ENCODE measurements at regions of chr22 and their contacts with region 1.

Region 1: GRCh38 chr22:19730655-19731360 is 7.5 kb downstream of the GP1BB start:
- DNase-seq: peak; percentile 78 to 95 (median 85)
- ATAC-seq: peak; percentile 91
- H3K4me3 ChIP-seq: peak overlapping the region in 1 of 2 experiments; percentile 66
- H3K4me3 Mint-ChIP-seq: peak overlapping the region; percentile 82
- H3K27ac ChIP-seq: no peak overlapping the region
- H3K27ac Mint-ChIP-seq: no peak overlapping the region
- H3K4me1 ChIP-seq: peaks cover 10% of the 10 kb centered on the region
- H3K4me1 Mint-ChIP-seq: peaks cover 2% of the 10 kb centered on the region
- H3K27me3 ChIP-seq: peaks cover 0 to 2% of the 10 kb centered on the region in 2 experiments
- H3K27me3 Mint-ChIP-seq: no peaks in the 10 kb centered on the region
- CTCF ChIP-seq: peak; percentile 82

Region 2: DNA sequence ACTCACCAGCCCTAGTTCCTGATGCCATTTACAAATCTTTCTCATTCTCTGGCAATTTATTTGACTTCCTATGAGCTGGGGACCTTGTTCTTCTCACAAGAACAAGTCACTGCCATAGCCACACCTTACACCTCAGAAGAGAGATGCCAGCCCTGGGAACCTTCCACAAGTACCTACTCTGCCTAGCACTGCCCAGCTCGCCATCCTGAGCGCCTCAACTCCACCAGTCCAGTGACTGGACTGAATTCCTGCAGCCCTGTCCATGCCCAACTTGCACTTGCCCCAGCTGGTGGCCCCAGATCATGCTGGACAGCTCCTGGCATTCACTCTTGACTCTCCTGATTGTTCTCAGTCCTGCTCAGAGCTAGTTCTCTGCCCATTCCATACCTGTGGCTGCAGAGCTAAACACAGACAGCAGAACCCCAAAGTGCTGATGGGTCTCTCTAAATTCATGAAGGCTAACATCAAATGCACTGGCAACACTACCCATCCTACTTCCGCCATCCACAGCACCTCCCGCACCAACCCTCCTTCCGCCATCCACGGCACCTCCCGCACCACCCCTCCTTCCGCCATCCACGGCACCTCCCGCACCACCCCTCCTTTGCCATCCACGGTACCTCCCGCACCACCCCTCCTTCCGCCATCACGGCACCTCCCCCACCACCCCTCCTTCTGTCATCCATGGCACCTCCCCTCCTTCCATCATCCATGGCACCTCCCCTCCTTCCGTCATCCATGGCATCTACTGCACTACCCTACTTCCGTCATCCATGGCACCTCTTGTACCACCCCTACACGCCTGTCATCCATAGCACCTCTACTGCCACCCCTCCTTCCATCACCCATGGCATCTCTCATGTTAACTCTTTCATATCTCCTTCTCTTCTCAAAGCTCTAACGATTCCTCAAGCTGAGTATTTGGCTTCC is 528.7 kb before region 1 on chr22:
- CTCF ChIA-PET with region 1: no interaction called
- POLR2A ChIA-PET with region 1: no interaction called
- intact Hi-C with region 1: no loop called
- DNase-seq: peak in 2 of 9 experiments; percentile 25 to 32
- ATAC-seq: no peak
- H3K4me3 ChIP-seq: no peak overlapping the region
- H3K4me3 Mint-ChIP-seq: no peak overlapping the region
- H3K27ac ChIP-seq: no peak overlapping the region
- H3K27ac Mint-ChIP-seq: no peak overlapping the region
- H3K4me1 ChIP-seq: no peaks in the 10 kb centered on the region
- H3K4me1 Mint-ChIP-seq: no peaks in the 10 kb centered on the region
- H3K27me3 ChIP-seq: no peaks in the 10 kb centered on the region
- H3K27me3 Mint-ChIP-seq: no peaks in the 10 kb centered on the region
- CTCF ChIP-seq: no peak

Region 3: DNA sequence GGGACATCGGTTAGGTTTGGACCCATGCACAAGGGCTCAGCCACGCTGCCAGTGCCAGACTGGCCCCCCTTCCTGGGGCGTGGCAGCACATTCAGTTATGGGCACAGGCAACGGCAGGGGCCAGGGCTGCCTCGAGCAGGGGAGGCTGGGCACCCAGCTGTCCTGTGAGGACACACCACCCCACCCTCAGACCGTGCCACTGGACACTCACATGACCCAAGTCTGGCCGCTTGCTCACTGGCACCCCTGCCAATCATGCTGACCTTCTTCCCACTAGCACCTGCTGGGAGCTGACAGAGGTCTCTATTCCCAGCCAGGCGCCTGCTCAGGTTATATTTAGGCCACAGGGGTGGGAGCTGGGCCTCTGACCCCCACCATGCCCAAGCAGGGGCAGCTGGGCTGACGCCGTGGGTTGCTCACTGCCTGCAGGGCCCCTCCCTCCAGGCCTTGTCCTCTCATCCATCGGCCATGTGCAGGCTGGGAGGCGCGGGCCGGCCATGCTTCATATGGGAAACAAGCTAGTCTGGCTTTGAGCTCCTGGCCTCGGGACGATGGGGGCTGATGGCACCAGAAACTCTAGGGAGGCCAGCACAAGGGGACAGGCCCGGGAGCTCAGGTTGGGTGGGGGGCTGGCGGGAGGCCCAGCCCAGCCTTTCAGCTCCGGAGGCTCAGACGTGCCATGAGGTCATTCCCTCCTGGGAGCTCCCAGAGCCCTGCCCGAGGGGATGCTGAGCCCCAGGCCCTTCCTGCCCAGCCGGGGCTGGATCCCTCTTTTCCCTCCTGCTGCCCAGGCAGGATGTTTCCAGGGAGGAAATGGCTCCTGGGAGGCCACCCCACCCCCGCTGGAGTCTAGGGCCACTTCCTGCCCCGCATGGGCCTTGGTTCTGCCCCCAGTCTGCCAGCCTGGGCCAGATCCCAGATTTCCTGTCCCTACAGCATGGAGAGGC is 14.6 kb after region 1 on chr22:
- CTCF ChIA-PET with region 1: interaction called, 20 read pairs
- POLR2A ChIA-PET with region 1: no interaction called
- intact Hi-C with region 1: no loop called
- DNase-seq: no peak
- ATAC-seq: no peak
- H3K4me3 ChIP-seq: no peak overlapping the region
- H3K4me3 Mint-ChIP-seq: no peak overlapping the region
- H3K27ac ChIP-seq: no peak overlapping the region
- H3K27ac Mint-ChIP-seq: no peak overlapping the region
- H3K4me1 ChIP-seq: no peaks in the 10 kb centered on the region
- H3K4me1 Mint-ChIP-seq: no peaks in the 10 kb centered on the region
- H3K27me3 ChIP-seq: no peaks in the 10 kb centered on the region
- H3K27me3 Mint-ChIP-seq: no peaks in the 10 kb centered on the region
- CTCF ChIP-seq: no peak

Region 4: DNA sequence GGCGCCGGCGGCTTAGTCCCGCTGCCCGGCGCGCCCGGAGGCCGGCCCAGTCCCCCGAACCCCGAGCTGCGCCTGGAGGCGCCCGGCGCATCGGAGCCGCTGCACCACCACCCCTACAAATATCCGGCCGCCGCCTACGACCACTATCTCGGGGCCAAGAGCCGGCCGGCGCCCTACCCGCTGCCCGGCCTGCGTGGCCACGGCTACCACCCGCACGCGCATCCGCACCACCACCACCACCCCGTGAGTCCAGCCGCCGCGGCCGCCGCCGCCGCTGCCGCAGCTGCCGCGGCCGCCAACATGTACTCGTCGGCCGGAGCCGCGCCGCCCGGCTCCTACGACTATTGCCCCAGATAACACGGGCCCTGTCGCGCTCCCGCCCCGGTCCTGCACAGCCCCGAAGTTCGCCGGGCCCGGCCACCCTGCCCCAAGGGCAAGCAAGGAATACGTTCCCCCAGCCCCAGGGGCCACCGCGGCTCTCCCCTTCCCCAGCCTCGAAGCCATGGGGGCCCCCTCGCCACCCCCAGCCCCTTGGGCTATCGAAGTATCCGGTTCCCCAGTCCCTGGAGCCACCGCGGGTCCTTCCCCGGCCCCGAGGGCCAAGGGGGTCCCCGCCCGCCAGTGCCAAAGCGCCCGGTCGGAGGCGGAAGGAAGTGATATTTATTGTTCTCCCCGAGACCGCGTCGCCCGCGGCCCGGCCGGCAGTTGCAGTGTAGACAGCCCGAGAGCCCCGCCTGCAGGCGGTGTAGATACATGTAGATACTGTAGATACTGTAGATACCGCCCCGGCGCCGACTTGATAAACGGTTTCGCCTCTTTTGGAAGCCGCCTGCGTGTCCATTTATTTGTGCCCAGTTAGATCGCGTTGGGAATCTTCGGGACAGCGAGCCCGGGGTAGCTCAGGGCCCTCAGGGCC is 36.0 kb after region 1 on chr22:
- CTCF ChIA-PET with region 1: interaction called, 10 read pairs
- POLR2A ChIA-PET with region 1: no interaction called
- intact Hi-C with region 1: no loop called
- DNase-seq: peak; percentile 13 to 64 (median 51)
- ATAC-seq: peak; percentile 73
- H3K4me3 ChIP-seq: peak overlapping the region in 1 of 2 experiments; percentile 26
- H3K4me3 Mint-ChIP-seq: peak overlapping the region; percentile 55
- H3K27ac ChIP-seq: no peak overlapping the region
- H3K27ac Mint-ChIP-seq: no peak overlapping the region
- H3K4me1 ChIP-seq: peaks cover 21% of the 10 kb centered on the region
- H3K4me1 Mint-ChIP-seq: peaks cover 18% of the 10 kb centered on the region
- H3K27me3 ChIP-seq: peaks cover 27 to 36% of the 10 kb centered on the region in 2 experiments
- H3K27me3 Mint-ChIP-seq: peaks cover 62% of the 10 kb centered on the region
- CTCF ChIP-seq: peak; percentile 27

Region 5: GRCh38 chr22:19891317-19892256 is 160.8 kb after region 1 on chr22:
- CTCF ChIA-PET with region 1: interaction called, 94 read pairs
- POLR2A ChIA-PET with region 1: no interaction called
- intact Hi-C with region 1: no loop called
- DNase-seq: peak; percentile 66 to 89 (median 82)
- ATAC-seq: peak; percentile 77
- H3K4me3 ChIP-seq: peak overlapping the region; percentile 45 to 55
- H3K4me3 Mint-ChIP-seq: peak overlapping the region; percentile 85
- H3K27ac ChIP-seq: peak overlapping the region; percentile 72 to 82
- H3K27ac Mint-ChIP-seq: peak overlapping the region; percentile 99
- H3K4me1 ChIP-seq: peaks cover 88% of the 10 kb centered on the region
- H3K4me1 Mint-ChIP-seq: peaks cover 90% of the 10 kb centered on the region
- H3K27me3 ChIP-seq: no peaks in the 10 kb centered on the region
- H3K27me3 Mint-ChIP-seq: no peaks in the 10 kb centered on the region
- CTCF ChIP-seq: no peak

Region 6: DNA sequence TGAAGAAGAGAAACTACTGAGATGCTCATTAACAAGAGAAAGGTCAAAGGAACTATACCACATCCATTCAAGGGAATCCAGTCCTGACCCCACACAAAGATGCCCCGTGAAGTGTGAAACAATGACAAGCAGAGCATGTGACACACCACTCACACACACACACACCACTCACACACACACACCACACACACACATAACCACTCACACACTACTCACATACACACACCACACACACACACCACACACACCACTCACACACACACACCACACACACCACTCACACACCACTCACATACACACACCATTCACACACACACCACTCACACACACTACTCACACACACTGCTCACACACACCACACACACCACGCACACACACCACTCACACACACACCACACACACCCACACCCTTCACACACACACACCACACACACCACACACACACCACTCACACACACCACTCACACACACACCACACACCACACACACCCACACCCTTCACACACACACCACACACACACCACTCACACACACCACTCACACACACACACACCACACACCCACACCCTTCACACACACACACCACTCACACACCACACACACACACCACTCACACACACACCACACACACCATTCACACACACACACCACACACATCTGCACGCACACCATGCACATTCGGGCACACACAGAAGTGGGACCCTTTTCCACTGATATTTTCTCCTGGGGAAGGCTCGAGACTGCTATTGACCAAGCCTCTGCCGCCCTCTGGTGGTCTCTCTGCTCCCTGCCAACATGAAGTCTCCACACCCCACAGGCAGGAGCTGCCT is 178.8 kb after region 1 on chr22:
- CTCF ChIA-PET with region 1: interaction called, 224 read pairs
- POLR2A ChIA-PET with region 1: interaction called, 13 read pairs
- intact Hi-C with region 1: loop called in 1 of 2 experiments (anchors 1 kb)
- DNase-seq: peak; percentile 71 to 91 (median 84)
- ATAC-seq: peak; percentile 91
- H3K4me3 ChIP-seq: no peak overlapping the region
- H3K4me3 Mint-ChIP-seq: no peak overlapping the region
- H3K27ac ChIP-seq: peak overlapping the region in 1 of 2 experiments; percentile 6
- H3K27ac Mint-ChIP-seq: peak overlapping the region; percentile 28
- H3K4me1 ChIP-seq: peaks cover 8% of the 10 kb centered on the region
- H3K4me1 Mint-ChIP-seq: peaks cover 4% of the 10 kb centered on the region
- H3K27me3 ChIP-seq: no peaks in the 10 kb centered on the region
- H3K27me3 Mint-ChIP-seq: no peaks in the 10 kb centered on the region
- CTCF ChIP-seq: peak; percentile 69

Region 7: DNA sequence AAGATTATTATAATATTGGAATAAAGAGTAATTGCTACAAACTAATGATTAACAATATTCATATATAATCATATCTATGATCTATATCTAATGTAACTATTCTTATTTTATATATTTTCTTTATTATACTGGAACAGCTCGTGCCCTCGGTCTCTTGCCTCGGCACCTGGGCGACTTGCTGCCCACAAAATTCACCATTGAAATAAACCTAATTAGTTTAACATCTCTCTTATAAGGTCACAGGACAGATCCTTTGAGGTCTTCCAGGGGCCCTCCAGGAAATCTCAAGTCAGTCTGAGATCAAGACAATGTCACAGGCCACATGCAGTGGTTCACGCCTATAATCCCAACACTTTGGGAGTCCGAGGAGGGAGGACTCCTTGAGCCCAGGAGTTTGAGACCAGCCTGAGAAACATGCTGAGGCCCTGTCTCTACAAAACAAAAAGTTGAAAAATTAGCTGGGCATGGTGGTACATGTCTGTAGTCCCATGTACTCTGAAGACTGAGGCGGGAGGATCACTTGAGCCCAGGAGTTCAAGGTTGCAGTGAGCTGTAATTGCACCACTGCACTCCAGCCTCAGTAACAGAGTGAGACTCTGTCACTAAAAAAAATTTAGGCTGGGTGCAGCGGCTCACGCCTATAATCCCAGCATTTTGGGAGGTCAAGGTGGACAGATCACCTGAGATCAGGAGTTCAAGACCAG is 217.4 kb after region 1 on chr22:
- CTCF ChIA-PET with region 1: interaction called, 29 read pairs
- POLR2A ChIA-PET with region 1: no interaction called
- intact Hi-C with region 1: loop called in 1 of 2 experiments (anchors 1 kb)
- DNase-seq: no peak
- ATAC-seq: no peak
- H3K4me3 ChIP-seq: no peak overlapping the region
- H3K4me3 Mint-ChIP-seq: no peak overlapping the region
- H3K27ac ChIP-seq: no peak overlapping the region
- H3K27ac Mint-ChIP-seq: no peak overlapping the region
- H3K4me1 ChIP-seq: peaks cover 13% of the 10 kb centered on the region
- H3K4me1 Mint-ChIP-seq: peaks cover 22% of the 10 kb centered on the region
- H3K27me3 ChIP-seq: no peaks in the 10 kb centered on the region
- H3K27me3 Mint-ChIP-seq: no peaks in the 10 kb centered on the region
- CTCF ChIP-seq: peak; percentile 5

Region 8: DNA sequence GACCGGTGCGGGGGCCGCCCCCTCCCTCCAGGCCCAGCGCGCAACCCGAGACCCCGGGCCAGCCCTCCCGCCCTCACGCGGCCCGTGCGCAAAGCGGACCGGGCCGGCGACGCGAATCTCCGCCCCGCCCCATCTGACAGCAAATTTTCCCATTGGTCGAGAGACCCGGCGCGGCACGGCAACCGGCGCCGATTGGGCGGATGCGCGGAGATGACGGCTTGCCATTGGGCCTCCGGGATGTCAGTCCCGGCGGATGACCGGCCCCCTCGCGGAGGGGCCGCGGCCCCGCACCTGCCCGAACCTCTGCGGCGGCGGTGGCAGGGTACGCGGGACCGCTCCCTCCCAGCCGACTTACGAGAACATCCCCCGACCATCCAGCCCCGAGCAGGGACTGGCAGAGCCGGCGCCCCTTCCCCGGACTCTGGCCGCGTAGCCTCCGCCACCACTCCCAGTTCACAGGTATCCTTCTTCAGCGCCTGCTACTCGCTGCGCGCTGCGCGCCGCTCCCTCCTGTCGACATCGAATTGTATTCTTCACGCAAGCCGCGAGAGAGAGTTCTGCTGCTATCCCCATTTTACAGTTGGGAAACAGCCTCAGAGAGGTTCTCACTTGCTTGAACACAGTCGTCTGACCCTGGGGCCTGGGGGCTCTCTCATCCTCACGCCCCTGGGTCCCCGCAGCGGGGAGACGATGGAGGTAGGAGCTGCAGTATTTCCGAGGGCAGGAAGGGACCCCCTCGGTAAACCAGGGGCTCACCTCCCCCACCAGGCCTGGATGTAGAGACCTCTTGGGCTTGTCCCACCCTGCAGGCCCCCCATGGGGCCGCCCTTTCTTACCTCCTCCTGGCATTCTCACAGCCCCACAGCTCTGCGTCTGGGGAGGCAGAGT is 286.2 kb after region 1 on chr22 and contains the start of gene ARVCF:
- CTCF ChIA-PET with region 1: interaction called, 5 read pairs
- POLR2A ChIA-PET with region 1: no interaction called
- intact Hi-C with region 1: loop called (anchors 2 to 5 kb)
- DNase-seq: peak; percentile 85 to 96 (median 92)
- ATAC-seq: peak; percentile 66
- H3K4me3 ChIP-seq: peak within 1 kb of the TSS; percentile 79 to 81
- H3K4me3 Mint-ChIP-seq: peak within 1 kb of the TSS; percentile 91
- H3K27ac ChIP-seq: no peak within 1 kb of the TSS
- H3K27ac Mint-ChIP-seq: peak within 1 kb of the TSS; percentile 14
- H3K4me1 ChIP-seq: peaks cover 19% of the 10 kb centered on the region
- H3K4me1 Mint-ChIP-seq: peaks cover 25% of the 10 kb centered on the region
- H3K27me3 ChIP-seq: no peaks in the 10 kb centered on the region
- H3K27me3 Mint-ChIP-seq: no peaks in the 10 kb centered on the region
- CTCF ChIP-seq: no peak
- total RNA-seq, gene ARVCF: 1.1 to 2.3 TPM

Region 9: GRCh38 chr22:20219667-20220628 is 489.1 kb after region 1 on chr22:
- CTCF ChIA-PET with region 1: no interaction called
- POLR2A ChIA-PET with region 1: no interaction called
- intact Hi-C with region 1: no loop called
- DNase-seq: no peak
- ATAC-seq: no peak
- H3K4me3 ChIP-seq: no peak overlapping the region
- H3K4me3 Mint-ChIP-seq: no peak overlapping the region
- H3K27ac ChIP-seq: no peak overlapping the region
- H3K27ac Mint-ChIP-seq: no peak overlapping the region
- H3K4me1 ChIP-seq: no peaks in the 10 kb centered on the region
- H3K4me1 Mint-ChIP-seq: no peaks in the 10 kb centered on the region
- H3K27me3 ChIP-seq: no peaks in the 10 kb centered on the region
- H3K27me3 Mint-ChIP-seq: no peaks in the 10 kb centered on the region
- CTCF ChIP-seq: no peak